Sigmoid colon (tissue), 7 donors: ENCODE measurements at regions of chr15 and their contacts with region 1.

Region 1: GRCh38 chr15:70097337-70098169 is at the start of gene TLE3:
- DNase-seq: peak; percentile 100
- H3K4me3 ChIP-seq: peak within 1 kb of the TSS; percentile 85 to 97 (median 94)
- H3K27ac ChIP-seq: peak within 1 kb of the TSS; percentile 93 to 99 (median 99)
- H3K4me1 ChIP-seq: peaks cover 4 to 73% (median 63%) of the 10 kb centered on the region in 4 donors
- H3K27me3 ChIP-seq: no peaks in the 10 kb centered on the region
- CTCF ChIP-seq: peak in 1 of 4 experiments; percentile 23
- EP300 ChIP-seq: peak in 1 of 4 donors; percentile 28
- POLR2A ChIP-seq: peak; percentile 92 to 96
- total RNA-seq, gene TLE3: 49.5 to 82.0 (median 58.8) TPM

Region 2: DNA sequence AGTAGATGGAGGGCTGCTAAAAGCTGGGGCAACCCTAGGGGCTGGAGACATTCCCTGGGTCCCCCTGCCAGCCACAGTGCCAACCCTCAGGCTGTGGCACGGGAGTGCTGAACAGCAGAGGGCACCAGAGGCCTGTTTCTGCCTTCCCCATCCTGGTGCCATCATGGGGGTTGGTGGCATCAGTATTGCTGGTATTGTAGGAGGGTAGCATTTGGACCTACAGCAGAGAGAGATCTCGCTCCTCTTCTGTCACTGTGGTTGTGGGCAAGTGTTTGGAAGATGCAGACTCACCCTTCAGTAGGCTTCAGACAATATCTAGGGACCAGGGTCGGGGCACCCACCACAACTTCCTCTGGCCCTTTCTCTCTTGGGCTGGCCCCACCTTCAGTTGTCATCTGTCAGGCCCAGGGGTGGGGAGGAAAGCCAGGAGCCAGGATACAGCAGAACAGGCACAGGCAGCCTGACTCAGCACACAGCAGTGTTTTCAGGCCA is 521.5 kb before region 1 on chr15:
- intact Hi-C with region 1: loop called (anchors 10 kb)
- DNase-seq: no peak
- H3K4me3 ChIP-seq: no peak overlapping the region
- H3K27ac ChIP-seq: no peak overlapping the region
- H3K4me1 ChIP-seq: no peaks in the 10 kb centered on the region
- H3K27me3 ChIP-seq: no peaks in the 10 kb centered on the region
- CTCF ChIP-seq: peak; percentile 25 to 74 (median 69)
- EP300 ChIP-seq: no peak
- POLR2A ChIP-seq: no peak

Region 3: DNA sequence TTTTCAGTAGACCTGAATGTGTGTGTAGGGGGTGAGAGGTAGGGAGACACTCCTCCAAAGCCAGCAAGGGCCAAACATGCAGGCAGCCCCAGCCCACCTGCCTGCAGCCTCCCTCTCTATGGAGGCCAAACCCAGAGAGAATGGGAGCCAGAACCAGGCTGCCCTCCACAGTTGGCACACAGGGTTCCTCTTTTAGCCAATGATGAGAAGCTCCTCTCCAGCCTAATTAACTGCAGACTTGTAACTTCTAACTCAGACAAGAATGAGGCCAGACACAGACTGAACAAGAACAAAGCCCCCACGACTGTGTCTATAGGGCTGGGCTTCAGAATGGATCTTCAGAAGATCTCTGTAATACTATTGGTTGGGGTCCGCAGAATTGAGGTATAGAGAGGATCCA is 12.4 kb after region 1 on chr15:
- intact Hi-C with region 1: loop called (anchors 1 kb)
- DNase-seq: no peak
- H3K4me3 ChIP-seq: no peak overlapping the region
- H3K27ac ChIP-seq: peak overlapping the region in 1 of 4 donors; percentile 87
- H3K4me1 ChIP-seq: peaks cover 0 to 23% (median 17%) of the 10 kb centered on the region in 4 donors
- H3K27me3 ChIP-seq: no peaks in the 10 kb centered on the region
- CTCF ChIP-seq: no peak
- EP300 ChIP-seq: no peak
- POLR2A ChIP-seq: no peak

Region 4: DNA sequence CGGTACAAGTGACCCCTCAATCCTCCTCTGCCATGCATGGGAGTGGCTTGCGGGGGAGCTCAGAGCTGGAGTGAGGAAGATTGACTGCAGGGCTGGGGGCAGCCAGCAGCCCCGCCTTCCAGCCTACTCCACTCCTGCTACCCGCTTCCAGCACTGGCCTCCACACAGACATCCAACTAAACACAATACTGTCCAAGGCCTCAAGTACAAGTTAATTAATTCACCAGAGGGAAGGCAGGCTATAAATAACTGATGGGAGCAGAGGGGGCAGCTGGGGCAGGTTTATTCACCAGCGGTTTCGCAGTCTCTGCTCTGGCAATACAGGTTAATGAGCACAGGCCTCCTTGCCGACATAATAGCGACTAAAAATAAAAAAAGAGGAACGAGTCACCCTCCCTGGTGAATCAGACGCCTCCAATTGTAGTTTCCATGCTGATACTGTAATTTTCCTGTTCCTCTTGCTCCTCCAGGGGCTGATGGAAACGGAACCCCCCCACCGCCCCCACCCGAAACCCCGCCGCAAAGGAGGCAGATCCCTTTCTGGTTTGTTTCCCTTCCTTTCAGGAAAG is 166.5 kb after region 1 on chr15:
- intact Hi-C with region 1: loop called (anchors 2 kb)
- DNase-seq: peak; percentile 84
- H3K4me3 ChIP-seq: no peak overlapping the region
- H3K27ac ChIP-seq: peak overlapping the region; percentile 22 to 74 (median 54)
- H3K4me1 ChIP-seq: peaks cover 0 to 69% (median 49%) of the 10 kb centered on the region in 4 donors
- H3K27me3 ChIP-seq: no peaks in the 10 kb centered on the region
- CTCF ChIP-seq: no peak
- EP300 ChIP-seq: peak in 3 of 4 donors; percentile 6 to 28 (median 23)
- POLR2A ChIP-seq: no peak

Region 5: DNA sequence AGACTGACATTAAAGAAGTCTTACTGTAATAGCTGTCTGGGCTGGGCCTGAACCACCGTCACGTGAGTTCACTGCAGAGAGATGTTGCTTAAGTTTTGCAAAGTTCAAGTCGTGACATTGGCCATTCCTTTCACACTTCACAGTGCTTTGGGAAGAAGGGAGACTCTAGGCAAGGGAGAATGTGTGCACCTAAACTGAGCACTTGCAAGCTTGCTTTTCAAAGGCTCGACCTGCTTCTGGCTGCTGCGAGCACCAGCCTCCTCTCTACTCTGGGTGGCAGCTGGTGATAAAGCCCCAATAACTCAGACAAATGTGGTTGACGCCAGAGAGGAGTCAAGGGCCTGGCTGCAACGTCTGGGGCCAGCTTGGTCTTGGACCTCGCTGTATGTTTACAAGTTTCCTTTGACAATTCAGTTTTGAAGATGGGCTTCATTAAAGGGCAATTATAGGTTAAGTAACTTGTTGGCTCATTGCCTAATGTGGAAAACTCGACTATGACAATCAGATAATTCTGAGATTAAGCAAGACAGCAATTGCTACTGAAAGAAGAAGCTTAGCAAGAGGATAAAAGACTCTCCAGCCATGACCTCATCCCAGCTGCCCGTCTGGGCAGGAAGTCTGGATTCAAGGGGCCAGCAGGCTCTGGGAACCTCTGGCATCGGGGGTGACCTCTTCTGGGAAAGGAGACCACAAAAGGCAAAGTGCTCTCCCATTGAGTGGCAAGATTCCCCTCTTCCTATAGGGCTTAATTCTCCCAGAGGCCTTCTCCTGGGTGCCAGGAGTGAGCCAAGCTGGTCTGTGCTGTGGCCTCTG is 242.3 kb after region 1 on chr15:
- intact Hi-C with region 1: loop called (anchors 5 kb)
- DNase-seq: no peak
- H3K4me3 ChIP-seq: no peak overlapping the region
- H3K27ac ChIP-seq: peak overlapping the region in 3 of 4 donors; percentile 74 to 78 (median 78)
- H3K4me1 ChIP-seq: peaks cover 0 to 36% (median 27%) of the 10 kb centered on the region in 4 donors
- H3K27me3 ChIP-seq: no peaks in the 10 kb centered on the region
- CTCF ChIP-seq: no peak
- EP300 ChIP-seq: no peak
- POLR2A ChIP-seq: no peak